Endothelial cell of umbilical vein (primary cell): ENCODE measurements at regions of chr15 and their contacts with region 1.

Region 1: DNA sequence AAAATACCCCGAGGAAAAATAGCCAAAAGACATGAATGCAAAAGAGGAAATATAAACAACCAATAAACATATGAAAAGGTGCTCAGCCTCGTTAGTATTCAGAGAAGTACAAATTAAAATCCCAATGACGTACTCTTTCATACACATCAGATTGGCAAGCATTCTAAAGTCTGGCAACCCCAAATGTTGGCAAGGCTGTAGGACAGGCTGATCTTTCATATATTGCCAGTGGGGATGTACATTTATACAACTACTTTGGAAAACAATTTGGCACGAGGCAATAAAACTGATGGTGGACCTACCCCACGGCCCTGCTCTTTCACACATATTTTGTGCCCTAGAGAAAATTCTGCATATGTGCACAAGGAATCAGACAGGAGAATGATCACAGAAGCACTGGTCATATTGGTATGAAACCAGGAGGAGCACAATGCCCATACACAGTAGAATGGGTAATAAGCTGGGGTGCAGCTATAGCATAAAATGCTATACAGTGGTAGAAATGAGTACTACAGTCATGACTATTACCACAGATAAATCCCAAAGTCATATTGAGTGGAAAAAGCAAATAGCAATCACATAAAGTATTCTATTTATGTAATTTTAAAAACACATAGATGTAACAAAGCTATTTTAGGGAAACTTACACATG is 176.0 kb upstream of the SLC24A5 start:
- DNase-seq: no peak
- H3K4me3 ChIP-seq: no peak overlapping the region
- H3K27ac ChIP-seq: no peak overlapping the region
- H3K4me1 ChIP-seq: no peaks in the 10 kb centered on the region
- H3K27me3 ChIP-seq: peaks cover 3 to 5% of the 10 kb centered on the region in 2 experiments
- CTCF ChIP-seq: no peak
- POLR2A ChIP-seq: no peak

Region 2: DNA sequence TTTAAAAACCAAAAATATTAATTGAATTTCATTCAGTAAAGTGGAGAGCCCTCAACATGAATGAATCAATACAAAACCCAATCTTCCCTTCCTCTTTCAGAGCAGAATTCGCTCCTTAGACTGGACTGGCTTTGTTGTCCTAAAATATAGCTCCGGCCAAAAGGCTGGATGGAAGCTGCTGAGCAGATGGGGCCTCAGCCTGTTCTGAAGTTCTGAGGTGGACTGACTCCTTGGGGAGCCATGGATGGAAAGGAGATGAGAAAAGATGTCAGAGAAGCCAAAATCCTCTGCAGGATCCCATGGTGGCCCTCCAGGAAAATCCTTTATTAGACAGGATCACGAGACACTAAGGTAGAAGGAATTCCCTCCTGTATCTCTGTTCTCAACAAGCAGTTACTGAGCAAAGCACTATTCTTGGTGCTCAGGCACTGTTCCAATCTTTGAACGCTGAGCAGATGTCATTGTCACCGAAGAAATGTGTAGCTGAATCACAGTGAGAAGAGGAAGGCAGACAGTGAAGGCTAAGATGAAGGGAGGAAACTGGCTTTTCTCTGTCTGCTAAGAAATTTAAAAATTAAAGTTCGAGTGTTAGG is 105.4 kb before region 1 on chr15:
- CTCF ChIA-PET with region 1: no interaction called
- POLR2A ChIA-PET with region 1: no interaction called
- dilution Hi-C with region 1: no loop called
- intact Hi-C with region 1: no loop called
- DNase-seq: no peak
- H3K4me3 ChIP-seq: no peak overlapping the region
- H3K27ac ChIP-seq: no peak overlapping the region
- H3K4me1 ChIP-seq: no peaks in the 10 kb centered on the region
- H3K27me3 ChIP-seq: peaks cover 0 to 3% of the 10 kb centered on the region in 2 experiments
- CTCF ChIP-seq: no peak
- POLR2A ChIP-seq: no peak

Region 3: GRCh38 chr15:47908950-47909670 is 35.7 kb before region 1 on chr15:
- CTCF ChIA-PET with region 1: no interaction called
- POLR2A ChIA-PET with region 1: no interaction called
- dilution Hi-C with region 1: no loop called
- intact Hi-C with region 1: no loop called
- DNase-seq: no peak
- H3K4me3 ChIP-seq: no peak overlapping the region
- H3K27ac ChIP-seq: no peak overlapping the region
- H3K4me1 ChIP-seq: no peaks in the 10 kb centered on the region
- H3K27me3 ChIP-seq: peaks cover 1 to 8% of the 10 kb centered on the region in 2 experiments
- CTCF ChIP-seq: no peak
- POLR2A ChIP-seq: no peak

Region 4: DNA sequence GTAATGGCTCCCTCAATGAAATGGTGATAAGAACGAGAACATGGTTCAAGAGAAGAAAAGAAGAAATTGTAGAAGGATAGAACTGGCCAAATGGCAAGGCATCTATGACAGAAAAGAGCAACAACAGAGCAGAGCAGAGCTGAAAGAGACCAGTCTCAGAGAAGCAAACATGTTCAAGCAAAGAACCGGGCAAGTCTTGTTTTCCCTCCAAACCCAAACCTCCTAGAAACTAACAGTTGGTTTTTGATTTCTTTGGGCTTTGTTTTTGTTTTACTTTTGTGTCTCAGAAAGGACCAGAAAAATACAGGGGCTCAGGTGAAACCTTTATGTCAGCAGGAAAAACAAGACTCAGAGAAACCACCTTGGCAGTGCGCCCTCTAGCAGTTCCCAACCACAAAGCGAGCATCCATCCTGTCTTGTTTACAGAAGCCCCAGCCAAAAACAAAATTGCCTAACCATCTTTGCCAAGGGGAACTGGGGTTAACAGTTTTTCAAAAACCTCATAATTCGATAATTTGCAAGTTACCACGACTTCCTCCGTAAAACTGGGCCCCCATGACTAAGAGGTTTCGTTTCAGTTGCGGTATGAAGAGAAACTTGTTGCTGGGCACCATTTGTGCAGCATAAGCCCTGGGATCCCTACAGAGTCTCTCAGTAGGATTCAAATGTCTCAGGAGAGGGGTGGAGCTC is 16.8 kb after region 1 on chr15:
- CTCF ChIA-PET with region 1: interaction called, 4 read pairs
- POLR2A ChIA-PET with region 1: no interaction called
- dilution Hi-C with region 1: no loop called
- intact Hi-C with region 1: loop called (anchors 1 kb)
- DNase-seq: no peak
- H3K4me3 ChIP-seq: no peak overlapping the region
- H3K27ac ChIP-seq: no peak overlapping the region
- H3K4me1 ChIP-seq: no peaks in the 10 kb centered on the region
- H3K27me3 ChIP-seq: no peaks in the 10 kb centered on the region
- CTCF ChIP-seq: no peak
- POLR2A ChIP-seq: no peak